ENCODE measurements at regions of chr16 and their contacts with region 1.

Region 1: GRCh38 chr16:2911580-2912329 is at the start of gene FLYWCH1:
- DNase-seq: peak; percentile 99
- H3K4me3 Mint-ChIP-seq: peak within 1 kb of the TSS; percentile 87
- H3K27ac Mint-ChIP-seq: peak within 1 kb of the TSS; percentile 80
- H3K4me1 Mint-ChIP-seq: peaks cover 38% of the 10 kb centered on the region
- H3K27me3 Mint-ChIP-seq: no peaks in the 10 kb centered on the region
- total RNA-seq, gene FLYWCH1: 49.2 to 52.2 TPM

Region 2: GRCh38 chr16:2673066-2673999 is 238.4 kb before region 1 on chr16:
- CTCF ChIA-PET with region 1: no interaction called
- POLR2A ChIA-PET with region 1: no interaction called
- intact Hi-C with region 1: no loop called
- DNase-seq: peak; percentile 97
- H3K4me3 Mint-ChIP-seq: peak overlapping the region; percentile 77
- H3K27ac Mint-ChIP-seq: peak overlapping the region; percentile 67
- H3K4me1 Mint-ChIP-seq: peaks cover 40% of the 10 kb centered on the region
- H3K27me3 Mint-ChIP-seq: no peaks in the 10 kb centered on the region

Region 3: GRCh38 chr16:2874912-2875362 is 36.8 kb before region 1 on chr16:
- CTCF ChIA-PET with region 1: interaction called, 12 read pairs
- POLR2A ChIA-PET with region 1: no interaction called
- intact Hi-C with region 1: loop called (anchors 5 kb)
- DNase-seq: peak; percentile 80
- H3K4me3 Mint-ChIP-seq: no peak overlapping the region
- H3K27ac Mint-ChIP-seq: no peak overlapping the region
- H3K4me1 Mint-ChIP-seq: no peaks in the 10 kb centered on the region
- H3K27me3 Mint-ChIP-seq: no peaks in the 10 kb centered on the region

Region 4: DNA sequence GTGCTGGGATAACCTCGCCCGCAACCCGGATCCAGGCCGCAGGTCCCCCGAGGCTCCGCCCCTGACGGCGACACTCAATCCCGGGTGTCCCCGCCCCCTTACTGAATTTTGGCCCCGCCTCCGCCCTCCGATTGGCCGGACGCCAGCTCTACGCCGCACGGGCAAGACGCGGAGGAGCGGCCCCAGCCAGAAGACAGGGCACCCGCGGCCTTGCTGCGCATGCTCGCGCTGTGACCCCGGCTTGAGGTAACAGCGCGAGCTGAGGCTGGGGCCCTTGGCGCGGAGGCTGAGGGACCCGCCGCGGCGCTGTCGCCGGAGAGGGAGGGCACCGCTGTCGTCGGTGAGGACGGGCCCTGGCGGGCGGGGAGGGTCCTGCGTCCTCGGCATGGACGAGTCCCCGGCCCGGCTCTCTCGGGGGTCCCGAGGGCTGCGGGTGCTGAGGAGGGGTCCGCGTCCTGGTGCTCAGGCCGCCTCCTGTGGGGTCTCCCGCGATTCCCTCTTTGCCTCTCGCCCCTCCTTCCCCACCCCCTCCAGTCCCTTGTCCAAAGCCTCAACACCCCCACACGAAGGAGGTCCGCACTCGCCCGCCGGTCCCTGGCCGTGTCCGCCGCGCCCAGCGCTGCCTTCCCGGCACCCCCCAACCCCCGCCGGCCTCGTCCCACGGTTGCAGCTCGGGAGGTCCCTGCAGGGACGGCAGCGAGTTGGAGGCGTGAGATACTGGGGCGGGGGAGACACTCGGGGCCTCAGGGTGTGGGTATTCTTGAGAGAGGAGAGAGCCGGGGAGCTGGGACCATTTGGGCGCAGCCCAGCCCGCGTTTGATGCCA is 28.5 kb before region 1 on chr16 and contains the start of gene FLYWCH2:
- CTCF ChIA-PET with region 1: interaction called, 11 read pairs
- POLR2A ChIA-PET with region 1: interaction called, 7 read pairs
- intact Hi-C with region 1: loop called (anchors 5 kb)
- DNase-seq: peak; percentile 100
- H3K4me3 Mint-ChIP-seq: peak within 1 kb of the TSS; percentile 90
- H3K27ac Mint-ChIP-seq: peak within 1 kb of the TSS; percentile 97
- H3K4me1 Mint-ChIP-seq: peaks cover 11% of the 10 kb centered on the region
- H3K27me3 Mint-ChIP-seq: no peaks in the 10 kb centered on the region
- total RNA-seq, gene FLYWCH2: 19.1 to 19.4 TPM

Region 5: DNA sequence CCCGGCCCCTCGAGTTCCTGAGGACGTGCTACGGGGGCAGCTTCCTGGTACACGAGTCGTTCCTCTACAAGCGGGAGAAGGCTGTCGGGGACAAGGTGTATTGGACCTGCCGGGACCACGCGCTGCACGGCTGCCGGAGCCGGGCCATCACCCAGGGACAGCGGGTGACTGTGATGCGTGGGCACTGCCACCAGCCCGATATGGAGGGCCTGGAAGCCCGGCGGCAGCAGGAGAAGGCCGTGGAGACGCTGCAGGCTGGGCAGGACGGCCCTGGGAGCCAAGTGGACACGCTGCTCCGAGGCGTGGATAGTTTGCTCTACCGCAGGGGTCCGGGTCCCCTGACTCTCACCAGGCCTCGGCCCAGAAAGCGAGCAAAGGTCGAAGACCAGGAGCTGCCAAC is 21.4 kb after region 1 on chr16:
- CTCF ChIA-PET with region 1: no interaction called
- POLR2A ChIA-PET with region 1: no interaction called
- intact Hi-C with region 1: no loop called
- DNase-seq: no peak
- H3K4me3 Mint-ChIP-seq: no peak overlapping the region
- H3K27ac Mint-ChIP-seq: no peak overlapping the region
- H3K4me1 Mint-ChIP-seq: no peaks in the 10 kb centered on the region
- H3K27me3 Mint-ChIP-seq: no peaks in the 10 kb centered on the region

Region 6: GRCh38 chr16:3009565-3010390 is 98.0 kb after region 1 on chr16:
- CTCF ChIA-PET with region 1: no interaction called
- POLR2A ChIA-PET with region 1: no interaction called
- intact Hi-C with region 1: no loop called
- DNase-seq: no peak
- H3K4me3 Mint-ChIP-seq: no peak overlapping the region
- H3K27ac Mint-ChIP-seq: no peak overlapping the region
- H3K4me1 Mint-ChIP-seq: peaks cover 24% of the 10 kb centered on the region
- H3K27me3 Mint-ChIP-seq: peaks cover 8% of the 10 kb centered on the region